Activated T-helper 2 cell treated with anti-CD3 and anti-CD28 coated beads, Interferon-gamma antibody, Interleukin-2, Interleukin-4, amounts not matched to agents 10 μg/mL and 5 μg/mL and 100 μg/mL, durations not matched to agents 14 hours and 24 hours and 36 hours (primary cell): ENCODE measurements at regions of chr1 and their contacts with region 1.

Region 1: DNA sequence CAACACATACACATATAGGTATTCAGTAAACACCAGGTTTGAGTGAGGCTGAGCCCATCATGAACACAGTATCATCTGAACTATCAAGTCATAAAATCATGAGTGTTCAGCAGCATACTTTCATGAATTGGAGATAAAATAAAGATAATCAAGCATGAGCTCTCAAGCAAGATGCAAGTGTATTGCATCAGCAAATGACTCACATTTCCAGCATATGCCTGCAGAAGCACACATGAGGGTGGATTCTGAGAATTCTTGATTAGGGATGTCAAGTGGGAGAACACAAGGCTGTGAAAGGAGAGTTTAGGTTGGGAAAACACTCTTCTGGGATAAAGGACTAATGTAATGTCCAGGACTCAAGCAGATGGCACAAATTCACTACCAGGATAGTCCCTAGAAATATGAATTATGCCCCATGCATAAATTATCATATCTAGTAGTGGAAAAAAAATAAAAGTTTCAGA is 299.2 kb downstream of the SRGAP2C start:
- DNase-seq: no peak
- H3K4me3 Mint-ChIP-seq: no peak overlapping the region
- H3K27ac Mint-ChIP-seq: peak overlapping the region; percentile 60
- H3K4me1 Mint-ChIP-seq: peaks cover 29% of the 10 kb centered on the region
- H3K27me3 Mint-ChIP-seq: no peaks in the 10 kb centered on the region

Region 2: DNA sequence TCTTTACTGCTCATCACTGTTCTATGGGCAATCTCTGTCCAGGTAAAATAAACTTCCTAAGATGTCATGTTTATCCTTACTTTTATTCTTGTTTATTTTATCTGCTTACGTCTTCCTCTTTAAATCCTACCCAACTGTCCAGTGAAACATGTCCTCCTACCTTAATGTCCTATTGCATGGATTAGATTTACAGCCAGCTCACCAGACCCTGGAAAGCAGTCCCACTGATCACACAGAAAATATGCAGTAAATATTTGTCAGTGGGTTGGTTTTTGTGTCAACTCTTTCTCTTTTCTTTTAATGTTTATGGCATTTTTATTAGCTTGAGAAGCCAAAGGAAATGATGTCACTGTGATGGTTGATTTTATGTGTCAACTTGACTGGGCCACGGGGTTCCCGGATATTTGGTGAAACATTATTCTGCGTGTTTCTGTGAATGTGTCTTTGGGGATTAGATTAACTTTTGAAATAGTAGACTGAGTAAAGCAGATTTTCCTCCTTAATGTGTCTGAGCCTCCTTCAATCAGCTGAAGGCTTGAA is 40.9 kb before region 1 on chr1:
- intact Hi-C with region 1: no loop called
- DNase-seq: no peak
- H3K4me3 Mint-ChIP-seq: no peak overlapping the region
- H3K27ac Mint-ChIP-seq: peak overlapping the region; percentile 4
- H3K4me1 Mint-ChIP-seq: peaks cover 32% of the 10 kb centered on the region
- H3K27me3 Mint-ChIP-seq: peaks cover under 1% of the 10 kb centered on the region

Region 3: DNA sequence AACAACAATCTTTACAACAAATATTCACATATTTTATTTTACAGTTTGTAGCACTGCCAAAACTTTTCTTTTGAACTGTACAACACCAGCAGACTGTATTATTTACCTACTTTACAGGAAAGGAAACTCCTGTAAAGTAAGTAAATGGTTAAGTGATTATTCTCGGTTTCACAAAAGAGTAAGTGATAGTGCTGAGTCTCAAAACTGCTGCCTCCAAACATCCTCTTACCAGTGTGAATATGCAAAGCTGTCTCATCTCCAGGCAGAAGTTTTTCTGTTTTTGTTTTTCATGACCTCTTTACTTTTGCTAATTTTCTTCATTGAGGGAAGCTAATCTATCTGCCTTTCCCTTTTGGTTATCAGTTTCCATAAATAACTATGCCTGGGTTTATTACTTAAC is 12.5 kb before region 1 on chr1:
- intact Hi-C with region 1: loop called (anchors 1 kb)
- DNase-seq: no peak
- H3K4me3 Mint-ChIP-seq: no peak overlapping the region
- H3K27ac Mint-ChIP-seq: peak overlapping the region; percentile 9
- H3K4me1 Mint-ChIP-seq: peaks cover 46% of the 10 kb centered on the region
- H3K27me3 Mint-ChIP-seq: no peaks in the 10 kb centered on the region